Panc1 (cell line): ENCODE measurements at regions of chr10 and their contacts with region 1.

Region 1: GRCh38 chr10:86936661-86937501 is 20.5 kb downstream of the MMRN2 start:
- DNase-seq: no peak
- ATAC-seq: no peak
- H3K4me3 ChIP-seq: no peak overlapping the region
- H3K27ac ChIP-seq: no peak overlapping the region
- H3K4me1 ChIP-seq: no peaks in the 10 kb centered on the region
- H3K27me3 ChIP-seq: no peaks in the 10 kb centered on the region
- CTCF ChIP-seq: no peak

Region 2: GRCh38 chr10:86693721-86694369 is 243.0 kb before region 1 on chr10:
- CTCF ChIA-PET with region 1: interaction called, 15 read pairs
- POLR2A ChIA-PET with region 1: no interaction called
- in situ Hi-C with region 1: no loop called
- intact Hi-C with region 1: no loop called
- DNase-seq: no peak
- ATAC-seq: peak; percentile 54; the same call in 1 of the 2 replicates
- H3K4me3 ChIP-seq: no peak overlapping the region
- H3K27ac ChIP-seq: no peak overlapping the region
- H3K4me1 ChIP-seq: peaks cover 5% of the 10 kb centered on the region
- H3K27me3 ChIP-seq: no peaks in the 10 kb centered on the region
- CTCF ChIP-seq: peak; percentile 90

Region 3: DNA sequence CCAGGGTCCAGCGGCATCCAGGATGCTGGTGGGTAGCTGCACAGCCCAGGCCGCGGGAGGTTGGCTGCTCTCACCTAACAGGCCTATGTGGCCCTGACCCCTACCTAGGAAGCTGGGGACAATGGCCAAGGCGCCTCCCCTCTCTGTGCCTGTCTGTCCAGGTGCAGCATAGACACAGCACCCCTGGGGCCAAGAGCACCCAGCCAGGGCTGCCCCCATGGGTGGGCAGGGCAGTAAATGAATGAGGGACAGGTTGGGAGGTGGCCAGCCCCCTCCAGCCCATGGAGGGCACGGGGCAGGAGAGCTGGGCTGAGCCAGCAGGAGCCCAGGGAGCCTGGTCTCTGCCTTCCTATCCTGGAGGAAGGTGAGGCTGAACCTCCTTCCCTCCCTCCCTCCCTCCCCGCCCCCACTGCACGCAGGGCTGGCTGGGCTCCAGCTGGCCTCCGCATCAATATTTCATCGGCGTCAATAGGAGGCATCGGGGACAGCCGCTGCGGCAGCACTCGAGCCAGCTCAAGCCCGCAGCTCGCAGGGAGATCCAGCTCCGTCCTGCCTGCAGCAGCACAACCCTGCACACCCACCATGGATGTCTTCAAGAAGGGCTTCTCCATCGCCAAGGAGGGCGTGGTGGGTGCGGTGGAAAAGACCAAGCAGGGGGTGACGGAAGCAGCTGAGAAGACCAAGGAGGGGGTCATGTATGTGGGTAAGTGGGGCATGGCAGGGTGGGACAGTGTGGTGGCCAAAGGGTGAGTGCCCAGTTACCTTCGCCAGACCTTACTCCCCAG is 21.4 kb after region 1 on chr10 and contains the start of gene SNCG:
- CTCF ChIA-PET with region 1: interaction called, 25 read pairs
- POLR2A ChIA-PET with region 1: interaction called, 3 read pairs
- in situ Hi-C with region 1: no loop called
- intact Hi-C with region 1: no loop called
- DNase-seq: no peak
- ATAC-seq: peak; percentile 30
- H3K4me3 ChIP-seq: 0 out of 4 replicates have a peak within 1 kb of the TSS, but pooled peaks of 1 of the 2 experiments have one; percentile 2
- H3K27ac ChIP-seq: peak within 1 kb of the TSS; percentile 70
- H3K4me1 ChIP-seq: peaks cover 60% of the 10 kb centered on the region
- H3K27me3 ChIP-seq: no peaks in the 10 kb centered on the region
- CTCF ChIP-seq: no peak
- total RNA-seq, gene SNCG: 5.2 TPM

Region 4: DNA sequence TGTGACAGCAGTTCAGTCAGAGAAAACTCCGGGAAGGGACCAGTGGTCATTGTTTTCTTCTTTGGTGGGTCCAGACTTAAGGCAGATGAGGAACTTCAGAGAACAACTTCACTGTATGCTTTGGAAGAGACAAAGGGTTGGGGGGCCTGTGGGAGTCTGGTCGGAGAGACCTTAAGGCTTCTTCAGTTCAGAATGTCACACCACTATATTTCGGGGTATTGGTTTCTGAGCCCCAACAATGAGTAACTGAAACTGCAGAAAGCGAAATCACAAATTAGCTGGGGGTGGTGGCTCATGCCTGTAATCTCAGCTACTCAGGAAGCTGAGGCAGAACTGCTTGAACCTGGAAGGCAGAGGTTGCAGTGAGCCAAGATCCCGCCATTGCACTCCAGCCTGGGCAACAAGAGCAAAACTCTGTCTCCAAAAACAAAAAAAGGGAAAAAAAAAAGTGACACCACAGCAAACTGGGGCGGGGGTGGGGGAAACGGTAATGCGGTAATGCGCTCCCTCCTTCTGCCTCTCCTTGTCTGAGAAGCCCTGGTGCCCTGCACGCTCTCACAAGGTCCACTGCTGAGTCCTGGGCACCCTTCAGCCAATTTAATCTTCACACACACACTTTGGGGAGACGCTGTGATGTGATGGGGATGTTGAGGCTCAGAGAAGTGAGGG is 29.2 kb after region 1 on chr10:
- CTCF ChIA-PET with region 1: interaction called, 43 read pairs
- POLR2A ChIA-PET with region 1: interaction called, 3 read pairs
- in situ Hi-C with region 1: no loop called
- intact Hi-C with region 1: no loop called
- DNase-seq: no peak
- ATAC-seq: no peak
- H3K4me3 ChIP-seq: no peak overlapping the region
- H3K27ac ChIP-seq: no peak overlapping the region; the same call in 1 of the 2 replicates
- H3K4me1 ChIP-seq: peaks cover 42% of the 10 kb centered on the region
- H3K27me3 ChIP-seq: no peaks in the 10 kb centered on the region
- CTCF ChIP-seq: no peak

Region 5: DNA sequence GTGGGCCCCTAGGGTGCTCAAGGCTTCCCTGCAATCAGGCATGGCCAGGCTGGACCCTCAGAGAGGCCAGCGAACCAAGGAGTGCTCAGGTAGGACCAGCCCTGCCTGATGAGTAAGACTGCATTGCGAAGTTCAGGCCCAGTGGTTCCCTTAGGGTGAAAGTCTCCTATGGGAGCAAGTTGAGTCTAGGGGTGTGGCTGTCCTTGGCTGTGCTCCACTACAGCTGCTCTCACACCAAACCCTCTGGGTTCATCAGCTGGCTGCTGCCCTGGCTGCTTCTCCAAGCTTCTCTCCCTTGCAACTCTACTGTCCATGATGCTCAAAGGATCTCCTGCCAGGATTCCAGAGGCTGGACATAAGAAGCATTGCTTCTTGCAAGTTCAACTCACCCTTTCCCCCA is 101.9 kb after region 1 on chr10:
- CTCF ChIA-PET with region 1: interaction called, 12 read pairs
- POLR2A ChIA-PET with region 1: no interaction called
- in situ Hi-C with region 1: no loop called
- intact Hi-C with region 1: no loop called
- DNase-seq: no peak
- ATAC-seq: peak; percentile 15; the same call in 1 of the 2 replicates
- H3K4me3 ChIP-seq: no peak overlapping the region
- H3K27ac ChIP-seq: no peak overlapping the region
- H3K4me1 ChIP-seq: no peaks in the 10 kb centered on the region
- H3K27me3 ChIP-seq: no peaks in the 10 kb centered on the region
- CTCF ChIP-seq: no peak